Activated naive CD4-positive, alpha-beta T cell treated with anti-CD3 and anti-CD28 coated beads for 36 hours (primary cell): ENCODE measurements at regions of chr1 and their contacts with region 1.

Region 1: GRCh38 chr1:91803847-91804545 is 82.0 kb downstream of the TGFBR3 start:
- DNase-seq: peak; percentile 92
- H3K4me3 Mint-ChIP-seq: peak overlapping the region; percentile 60
- H3K27ac Mint-ChIP-seq: peak overlapping the region; percentile 98
- H3K4me1 Mint-ChIP-seq: peaks cover 31% of the 10 kb centered on the region
- H3K27me3 Mint-ChIP-seq: no peaks in the 10 kb centered on the region

Region 2: GRCh38 chr1:91569411-91570119 is 234.4 kb before region 1 on chr1:
- CTCF ChIA-PET with region 1: no interaction called
- intact Hi-C with region 1: no loop called
- DNase-seq: peak; percentile 32
- H3K4me3 Mint-ChIP-seq: no peak overlapping the region
- H3K27ac Mint-ChIP-seq: no peak overlapping the region
- H3K4me1 Mint-ChIP-seq: peaks cover 15% of the 10 kb centered on the region
- H3K27me3 Mint-ChIP-seq: no peaks in the 10 kb centered on the region

Region 3: GRCh38 chr1:91673613-91674012 is 130.4 kb before region 1 on chr1:
- CTCF ChIA-PET with region 1: interaction called, 3 read pairs
- intact Hi-C with region 1: loop called (anchors 1 kb)
- DNase-seq: no peak
- H3K4me3 Mint-ChIP-seq: no peak overlapping the region
- H3K27ac Mint-ChIP-seq: peak overlapping the region; percentile 73
- H3K4me1 Mint-ChIP-seq: peaks cover 28% of the 10 kb centered on the region
- H3K27me3 Mint-ChIP-seq: no peaks in the 10 kb centered on the region

Region 4: GRCh38 chr1:91876040-91876470 is 72.1 kb after region 1 on chr1:
- CTCF ChIA-PET with region 1: interaction called, 4 read pairs
- intact Hi-C with region 1: loop called (anchors 1 kb)
- DNase-seq: peak; percentile 61
- H3K4me3 Mint-ChIP-seq: no peak overlapping the region
- H3K27ac Mint-ChIP-seq: peak overlapping the region; percentile 5
- H3K4me1 Mint-ChIP-seq: peaks cover 74% of the 10 kb centered on the region
- H3K27me3 Mint-ChIP-seq: no peaks in the 10 kb centered on the region

Region 5: DNA sequence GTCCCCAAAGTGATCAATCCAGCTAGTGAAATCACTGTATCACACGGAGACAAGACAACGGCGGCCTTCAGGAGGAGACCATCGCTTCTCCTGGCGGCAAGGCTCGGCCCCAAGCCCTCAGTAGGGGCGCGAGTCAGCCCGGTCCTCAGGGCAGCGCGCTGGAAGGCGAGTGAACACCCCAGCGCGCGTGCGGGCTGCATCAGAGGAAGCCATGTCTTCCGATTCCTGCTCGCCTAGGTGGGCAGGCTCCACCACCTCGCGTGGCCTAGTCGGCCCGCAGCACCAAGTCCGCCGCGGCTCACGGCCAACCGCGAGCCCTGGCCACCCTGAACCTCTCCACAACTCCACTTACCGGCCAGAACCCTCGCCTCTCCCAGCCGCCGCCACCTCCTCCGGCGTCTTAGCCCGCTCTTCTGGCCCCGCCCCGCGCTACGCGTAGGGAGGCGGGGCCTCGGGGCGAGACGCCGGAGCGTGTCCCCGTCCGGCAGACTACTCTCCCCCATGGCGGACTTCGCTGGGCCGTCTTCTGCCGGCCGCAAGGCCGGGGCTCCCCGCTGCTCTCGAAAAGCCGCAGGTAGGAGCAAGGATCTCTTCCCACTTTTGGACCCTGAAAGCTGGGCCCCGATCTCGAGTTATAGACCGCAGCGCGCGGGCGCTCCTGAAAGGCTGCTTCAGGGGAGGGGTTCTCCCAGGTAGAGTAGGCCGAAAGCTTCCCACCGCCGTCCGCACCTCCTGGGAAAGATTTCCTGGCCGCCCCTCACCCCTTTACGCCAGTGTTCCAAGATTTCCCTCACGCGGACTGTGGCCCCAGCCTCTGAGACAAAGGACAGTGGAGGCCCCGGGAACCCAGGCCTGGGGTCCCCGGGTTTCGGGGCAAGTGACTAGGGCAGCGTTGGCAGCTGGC is 494.8 kb after region 1 on chr1 and contains the starts of genes GLMN and RPAP2:
- CTCF ChIA-PET with region 1: no interaction called
- intact Hi-C with region 1: loop called (anchors 5 kb)
- DNase-seq: peak; percentile 69
- H3K4me3 Mint-ChIP-seq: peak within 1 kb of the TSS; percentile 86
- H3K27ac Mint-ChIP-seq: peak within 1 kb of the TSS; percentile 88
- H3K4me1 Mint-ChIP-seq: peaks cover 34% of the 10 kb centered on the region
- H3K27me3 Mint-ChIP-seq: no peaks in the 10 kb centered on the region
- total RNA-seq, gene GLMN: 14.0 to 15.3 TPM
- total RNA-seq, gene RPAP2: 21.0 to 21.9 TPM

Region 6: DNA sequence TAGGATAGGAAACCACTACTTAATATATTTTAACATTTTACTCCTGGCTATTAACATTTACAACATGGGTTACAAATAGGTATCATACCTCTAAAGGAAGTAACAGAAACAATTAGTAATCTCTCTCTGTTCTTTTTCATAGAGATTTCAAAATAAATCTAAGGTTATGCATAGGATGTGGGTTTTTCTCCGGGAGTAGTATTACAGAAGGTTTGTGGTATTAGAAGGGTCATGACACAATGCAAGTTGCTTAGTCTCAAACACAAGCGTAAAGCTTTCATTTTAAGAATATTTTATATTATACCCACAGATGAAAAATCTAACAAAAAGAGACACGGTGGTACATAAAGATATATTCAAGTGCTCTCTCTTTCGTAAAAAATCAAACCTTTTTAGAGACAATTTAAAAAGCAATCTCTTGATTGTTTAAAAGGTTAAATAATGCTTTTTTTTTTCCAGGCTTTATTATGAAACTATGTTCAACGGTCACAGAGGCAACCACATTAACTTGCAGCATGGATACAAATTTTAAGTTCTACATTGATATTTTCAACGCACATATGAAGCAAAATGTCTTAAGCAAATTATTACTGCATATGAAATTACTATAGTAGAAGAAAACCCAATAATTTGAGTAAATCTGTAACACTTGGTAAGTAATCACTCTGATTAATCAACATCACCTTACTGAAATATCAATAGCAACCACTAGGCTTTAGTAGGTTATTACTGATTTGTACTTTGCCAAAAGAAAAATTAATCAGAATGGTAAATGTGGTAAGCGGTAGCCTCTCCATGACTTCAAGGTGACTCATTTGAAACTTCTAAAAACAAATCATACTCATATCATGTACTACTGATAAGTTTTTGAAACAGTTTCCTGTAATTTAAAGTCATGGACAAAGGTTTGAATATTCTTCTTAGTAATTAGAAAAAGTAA is 780.1 kb after region 1 on chr1:
- CTCF ChIA-PET with region 1: no interaction called
- intact Hi-C with region 1: loop called (anchors 1 kb)
- DNase-seq: no peak
- H3K4me3 Mint-ChIP-seq: peak overlapping the region; percentile 45
- H3K27ac Mint-ChIP-seq: peak overlapping the region; percentile 88
- H3K4me1 Mint-ChIP-seq: peaks cover 72% of the 10 kb centered on the region
- H3K27me3 Mint-ChIP-seq: no peaks in the 10 kb centered on the region